ENCODE measurements at regions of chr20 and their contacts with region 1.

Region 1: GRCh38 chr20:25390538-25391528 is at the start of gene ABHD12:
- DNase-seq: peak; percentile 96 to 98
- H3K4me3 ChIP-seq: peak within 1 kb of the TSS; percentile 64 to 85
- H3K27ac ChIP-seq: peak within 1 kb of the TSS; percentile 78 to 80
- H3K4me1 ChIP-seq: peaks cover 0 to 12% (median 8%) of the 10 kb centered on the region in 4 donors
- H3K27me3 ChIP-seq: no peaks in the 10 kb centered on the region
- CTCF ChIP-seq: no peak

Region 2: GRCh38 chr20:25299806-25300205 is 91.0 kb before region 1 on chr20:
- intact Hi-C with region 1: loop called (anchors 5 kb)
- DNase-seq: no peak
- H3K4me3 ChIP-seq: no peak overlapping the region
- H3K27ac ChIP-seq: peak overlapping the region in 1 of 2 donors; percentile 6
- H3K4me1 ChIP-seq: peaks cover 0 to 25% (median 19%) of the 10 kb centered on the region in 4 donors
- H3K27me3 ChIP-seq: no peaks in the 10 kb centered on the region
- CTCF ChIP-seq: no peak

Region 3: GRCh38 chr20:25327878-25328235 is 63.0 kb before region 1 on chr20:
- intact Hi-C with region 1: no loop called
- DNase-seq: no peak
- H3K4me3 ChIP-seq: no peak overlapping the region
- H3K27ac ChIP-seq: no peak overlapping the region
- H3K4me1 ChIP-seq: peaks cover 0 to 23% (median 8%) of the 10 kb centered on the region in 4 donors
- H3K27me3 ChIP-seq: no peaks in the 10 kb centered on the region
- CTCF ChIP-seq: no peak

Measured in tibial artery (tissue), 4 donors.